ENCODE measurements at regions of chr2 and their contacts with region 1.

Region 1: DNA sequence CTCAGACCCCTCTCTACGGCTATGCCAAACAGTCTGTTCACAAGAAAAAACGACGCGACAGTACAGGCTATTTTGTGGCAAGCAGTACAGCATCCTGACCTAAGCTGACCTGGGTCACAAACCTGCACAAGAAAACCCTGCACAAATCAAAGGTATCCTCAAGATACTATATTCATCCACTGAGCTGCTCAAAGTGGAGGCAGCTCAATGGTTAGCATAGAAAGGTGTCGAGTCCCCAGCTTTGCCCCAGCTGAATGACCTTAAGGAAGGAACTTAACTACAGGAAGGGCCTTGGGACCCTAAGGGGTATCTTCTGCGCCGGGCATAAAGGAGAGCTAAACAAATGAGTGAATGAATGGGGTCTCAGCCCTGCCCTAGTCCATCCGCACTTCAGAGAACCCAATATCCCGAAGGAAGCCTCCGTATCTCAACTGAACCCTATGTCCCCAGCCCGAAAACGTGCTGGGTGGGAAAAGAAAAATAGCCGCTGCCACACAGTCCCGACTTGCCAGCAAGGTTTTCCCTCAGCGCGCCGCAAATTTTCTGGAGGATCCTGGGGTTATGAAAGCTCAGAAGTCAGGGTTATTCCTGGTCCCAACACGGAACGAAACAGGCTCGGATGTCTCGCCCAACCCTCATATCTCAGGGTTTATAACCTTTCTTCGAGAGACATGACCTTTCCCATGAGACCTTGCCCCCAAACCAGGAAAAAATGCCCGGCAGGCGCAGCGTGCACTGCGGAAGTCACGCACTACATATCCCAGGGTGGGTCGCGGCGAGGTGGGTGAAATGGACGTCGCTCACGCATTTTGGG is at the start of gene FASTKD1:
- DNase-seq: peak; percentile 94
- H3K4me3 Mint-ChIP-seq: peak within 1 kb of the TSS; percentile 98
- H3K27ac Mint-ChIP-seq: peak within 1 kb of the TSS; percentile 89
- H3K4me1 Mint-ChIP-seq: peaks cover 23% of the 10 kb centered on the region
- H3K27me3 Mint-ChIP-seq: no peaks in the 10 kb centered on the region
- total RNA-seq, gene FASTKD1: 41.3 to 42.7 TPM

Region 2: GRCh38 chr2:169479257-169480078 is 93.9 kb before region 1 on chr2 and contains the start of gene BBS5:
- CTCF ChIA-PET with region 1: no interaction called
- intact Hi-C with region 1: loop called (anchors 1 kb)
- DNase-seq: peak; percentile 87
- H3K4me3 Mint-ChIP-seq: peak within 1 kb of the TSS; percentile 91
- H3K27ac Mint-ChIP-seq: no peak within 1 kb of the TSS
- H3K4me1 Mint-ChIP-seq: peaks cover 10% of the 10 kb centered on the region
- H3K27me3 Mint-ChIP-seq: no peaks in the 10 kb centered on the region
- total RNA-seq, gene BBS5: 2.1 to 2.2 TPM

Region 3: GRCh38 chr2:169584005-169584877 is 10.9 kb after region 1 on chr2 and contains the start of gene PPIG:
- CTCF ChIA-PET with region 1: no interaction called
- intact Hi-C with region 1: loop called (anchors 1 kb)
- DNase-seq: peak; percentile 94
- H3K4me3 Mint-ChIP-seq: peak within 1 kb of the TSS; percentile 98
- H3K27ac Mint-ChIP-seq: peak within 1 kb of the TSS; percentile 100
- H3K4me1 Mint-ChIP-seq: peaks cover 33% of the 10 kb centered on the region
- H3K27me3 Mint-ChIP-seq: no peaks in the 10 kb centered on the region
- total RNA-seq, gene PPIG: 53.4 to 56.6 TPM